ENCODE measurements at regions of chr3 and their contacts with region 1.

Region 1: DNA sequence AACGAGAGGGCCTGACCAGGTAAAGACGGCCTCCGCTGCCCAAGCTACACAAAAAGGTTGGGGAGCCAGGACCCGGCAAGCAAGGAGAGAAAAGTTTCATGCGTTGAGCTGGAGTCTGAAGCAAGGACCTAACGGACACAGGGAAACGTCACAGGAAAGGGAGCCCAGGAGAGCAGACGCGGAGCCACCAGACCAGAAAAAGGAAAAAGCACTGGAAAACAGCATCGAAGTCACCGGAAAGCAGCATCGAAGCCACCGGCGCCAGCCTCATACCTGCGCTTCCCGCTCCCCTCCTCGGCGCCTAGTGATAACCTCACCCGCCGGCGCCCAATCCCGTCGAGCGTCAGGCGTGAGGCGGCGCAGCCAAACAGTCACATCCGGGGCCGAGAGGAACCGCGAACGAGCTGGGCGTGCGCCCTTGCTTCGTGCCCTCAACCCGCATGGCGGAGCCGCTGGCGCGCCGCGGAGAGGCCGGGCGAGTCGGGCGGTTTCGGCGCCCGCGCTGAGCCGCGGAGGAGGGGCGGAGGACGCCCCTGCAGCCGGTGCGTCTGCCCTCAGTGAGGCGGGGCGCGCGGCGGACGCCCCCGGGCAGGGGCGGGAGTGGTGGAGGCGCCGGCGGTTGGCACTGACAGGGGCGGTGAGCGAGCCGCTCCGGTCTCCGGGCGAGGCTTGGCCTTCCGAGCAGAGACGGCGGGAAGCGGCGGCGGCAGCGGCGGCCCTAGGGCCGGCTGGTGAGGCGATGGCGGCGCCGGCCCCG is at the starts of genes FBXO45 and WDR53:
- DNase-seq: peak; percentile 95
- H3K4me3 Mint-ChIP-seq: peak within 1 kb of the TSS; percentile 85
- H3K27ac Mint-ChIP-seq: peak within 1 kb of the TSS; percentile 87
- H3K4me1 Mint-ChIP-seq: peaks cover 20% of the 10 kb centered on the region
- H3K27me3 Mint-ChIP-seq: no peaks in the 10 kb centered on the region
- CTCF ChIP-seq: no peak
- total RNA-seq, gene FBXO45: 13.2 and 16.0 TPM in 2 replicates
- total RNA-seq, gene WDR53: 14.4 and 18.8 TPM in 2 replicates

Region 2: GRCh38 chr3:196339493-196340254 is 228.8 kb before region 1 on chr3:
- CTCF ChIA-PET with region 1: no interaction called
- POLR2A ChIA-PET with region 1: interaction called, 11 read pairs
- intact Hi-C with region 1: no loop called
- DNase-seq: peak; percentile 86
- H3K4me3 Mint-ChIP-seq: no peak overlapping the region
- H3K27ac Mint-ChIP-seq: peak overlapping the region; percentile 57
- H3K4me1 Mint-ChIP-seq: peaks cover 24% of the 10 kb centered on the region
- H3K27me3 Mint-ChIP-seq: no peaks in the 10 kb centered on the region
- CTCF ChIP-seq: no peak

Region 3: DNA sequence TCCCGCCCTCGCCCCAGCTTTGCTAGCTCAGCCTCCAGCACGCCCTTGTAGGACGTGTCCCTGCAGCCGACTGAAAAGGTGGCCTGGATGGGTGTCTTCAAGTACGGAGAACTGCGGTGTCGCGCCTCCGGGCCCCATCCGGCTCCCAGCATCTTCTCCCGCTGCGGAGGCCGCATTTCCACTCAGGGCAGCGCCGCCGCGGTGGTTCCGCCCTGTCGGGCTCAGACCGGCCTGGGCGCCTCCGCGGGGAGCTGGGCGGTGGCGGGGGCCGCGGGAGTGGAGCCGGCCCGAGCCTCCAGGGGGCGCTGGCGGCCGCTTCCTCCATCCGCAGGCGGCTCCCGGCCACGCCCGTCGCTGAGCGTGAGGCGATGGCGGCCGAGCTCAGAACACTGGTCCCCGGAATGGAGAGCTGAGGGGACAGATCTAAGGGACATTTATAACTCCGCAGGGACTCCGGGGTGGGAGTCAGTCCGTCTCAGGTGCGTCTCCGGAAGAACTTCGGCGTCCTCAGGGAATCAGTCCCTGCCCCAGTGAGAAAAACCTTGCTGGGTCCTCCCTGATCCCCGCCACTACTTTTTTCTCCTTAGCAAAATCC is 39.7 kb before region 1 on chr3:
- CTCF ChIA-PET with region 1: interaction called, 3 read pairs
- POLR2A ChIA-PET with region 1: interaction called, 12 read pairs
- intact Hi-C with region 1: no loop called
- DNase-seq: peak; percentile 56
- H3K4me3 Mint-ChIP-seq: peak overlapping the region; percentile 52
- H3K27ac Mint-ChIP-seq: no peak overlapping the region
- H3K4me1 Mint-ChIP-seq: peaks cover 12% of the 10 kb centered on the region
- H3K27me3 Mint-ChIP-seq: no peaks in the 10 kb centered on the region
- CTCF ChIP-seq: peak; percentile 44

Region 4: GRCh38 chr3:196537319-196537984 is 31.0 kb before region 1 on chr3:
- CTCF ChIA-PET with region 1: interaction called, 3 read pairs
- POLR2A ChIA-PET with region 1: interaction called, 15 read pairs
- intact Hi-C with region 1: no loop called
- DNase-seq: peak; percentile 45
- H3K4me3 Mint-ChIP-seq: no peak overlapping the region
- H3K27ac Mint-ChIP-seq: peak overlapping the region; percentile 14
- H3K4me1 Mint-ChIP-seq: peaks cover 13% of the 10 kb centered on the region
- H3K27me3 Mint-ChIP-seq: no peaks in the 10 kb centered on the region
- CTCF ChIP-seq: peak; percentile 73

Region 5: DNA sequence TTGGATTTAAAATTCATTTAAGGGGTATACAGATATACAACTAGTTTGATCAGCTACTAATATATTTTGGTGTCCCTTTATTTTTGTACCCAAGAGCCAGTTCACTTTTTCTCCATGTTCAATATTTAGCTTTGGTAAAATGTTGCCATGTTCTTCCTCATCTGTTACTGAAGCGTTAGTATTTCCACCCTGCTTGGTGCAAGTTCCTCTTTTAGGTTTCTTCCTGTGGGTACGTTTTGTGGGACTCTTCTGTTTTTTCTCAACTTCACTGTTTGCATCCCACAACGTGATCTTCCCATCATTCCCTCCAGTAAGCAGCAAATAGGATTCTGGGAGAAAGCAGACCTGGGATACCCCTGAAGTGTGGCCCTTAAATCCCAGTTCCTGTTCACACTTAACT is 14.2 kb before region 1 on chr3:
- CTCF ChIA-PET with region 1: interaction called, 4 read pairs
- POLR2A ChIA-PET with region 1: interaction called, 14 read pairs
- intact Hi-C with region 1: no loop called
- DNase-seq: no peak
- H3K4me3 Mint-ChIP-seq: no peak overlapping the region
- H3K27ac Mint-ChIP-seq: no peak overlapping the region
- H3K4me1 Mint-ChIP-seq: no peaks in the 10 kb centered on the region
- H3K27me3 Mint-ChIP-seq: no peaks in the 10 kb centered on the region
- CTCF ChIP-seq: no peak

Region 6: DNA sequence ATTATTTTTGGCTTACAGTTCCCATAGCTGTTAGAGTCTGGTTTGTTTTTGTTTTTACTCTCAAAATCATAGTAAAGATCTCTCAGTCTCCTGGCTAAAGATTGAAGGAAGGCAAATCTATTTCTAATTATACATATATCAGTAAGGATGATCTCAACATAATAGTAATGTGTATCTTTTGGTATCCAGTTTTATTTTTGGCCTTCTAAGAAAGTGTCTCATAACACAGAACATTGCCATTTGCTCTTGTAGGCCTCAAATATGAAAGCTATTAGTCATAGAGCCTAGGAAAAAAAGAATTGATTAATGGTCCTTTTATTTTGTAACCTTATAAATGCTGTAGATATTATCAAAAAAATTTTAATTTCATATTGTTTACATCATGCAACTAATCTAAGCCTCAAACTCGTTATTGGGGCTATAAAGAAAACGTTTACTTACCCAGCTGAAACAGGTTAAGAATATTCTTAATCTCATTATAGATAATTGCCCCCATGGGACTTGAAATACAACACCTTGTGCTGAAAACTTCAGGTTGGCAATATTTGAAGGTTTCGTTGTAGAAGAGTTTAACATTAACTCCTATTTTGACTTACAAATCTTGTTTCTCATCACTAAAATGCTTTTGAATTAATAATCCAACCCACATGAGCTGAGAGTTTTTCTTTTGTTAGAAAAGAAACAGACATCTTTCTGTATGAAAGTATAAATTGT is 16.8 kb after region 1 on chr3:
- CTCF ChIA-PET with region 1: no interaction called
- POLR2A ChIA-PET with region 1: interaction called, 11 read pairs
- intact Hi-C with region 1: no loop called
- DNase-seq: no peak
- H3K4me3 Mint-ChIP-seq: no peak overlapping the region
- H3K27ac Mint-ChIP-seq: no peak overlapping the region
- H3K4me1 Mint-ChIP-seq: no peaks in the 10 kb centered on the region
- H3K27me3 Mint-ChIP-seq: no peaks in the 10 kb centered on the region
- CTCF ChIP-seq: no peak

Measured in MCF 10A (cell line).